OCI-LY7 (cell line): ENCODE measurements at regions of chr14 and their contacts with region 1.

Region 1: DNA sequence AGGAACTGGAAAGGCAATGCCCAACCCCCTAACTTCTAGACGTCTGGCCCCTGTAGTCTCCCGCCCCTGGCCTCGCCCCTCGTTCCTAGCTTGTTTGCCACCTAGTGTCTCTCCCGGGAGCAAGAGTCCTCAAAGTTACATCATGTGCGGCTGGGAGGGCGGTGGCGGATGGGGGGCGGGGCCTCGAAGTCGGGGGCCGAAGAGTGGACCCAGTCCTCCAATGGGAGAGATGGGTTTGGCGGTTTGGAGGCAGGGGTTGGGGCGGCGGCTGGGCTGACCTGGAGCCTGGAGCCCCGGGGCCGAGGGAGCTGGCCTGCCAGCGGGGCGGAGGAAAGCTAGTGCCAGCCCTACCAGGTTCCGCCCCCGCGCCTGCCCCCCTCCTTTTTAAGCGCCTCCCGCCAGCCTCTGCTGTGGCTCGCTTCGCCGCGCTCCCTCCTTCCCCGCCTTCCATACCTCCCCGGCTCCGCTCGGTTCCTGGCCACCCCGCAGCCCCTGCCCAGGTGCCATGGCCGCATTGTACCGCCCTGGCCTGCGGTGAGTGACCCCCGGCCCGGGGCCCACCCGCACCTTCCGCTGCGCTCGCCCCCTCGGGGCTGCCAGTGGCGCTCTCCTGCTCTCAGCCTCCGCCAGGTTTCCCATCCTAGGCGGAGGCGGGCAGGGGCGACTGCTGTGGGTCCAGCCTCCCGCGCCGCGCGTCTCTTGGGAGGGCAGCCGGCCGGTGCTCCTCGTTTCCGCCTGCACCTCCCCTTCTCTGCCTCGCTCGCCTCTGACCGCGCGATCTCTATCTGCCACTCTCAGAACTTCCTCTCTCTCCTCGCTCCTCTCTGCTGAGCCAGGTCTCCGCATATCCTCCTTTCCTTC is at the start of gene PCK2:
- DNase-seq: peak; percentile 88
- H3K4me3 ChIP-seq: peak within 1 kb of the TSS; percentile 81
- H3K27ac ChIP-seq: peak within 1 kb of the TSS; percentile 75
- H3K4me1 ChIP-seq: peaks cover 39% of the 10 kb centered on the region
- CTCF ChIP-seq: peak; percentile 24; the same call in 1 of the 2 replicates
- total RNA-seq, gene PCK2: 33.7 and 43.6 TPM in 2 replicates

Region 2: DNA sequence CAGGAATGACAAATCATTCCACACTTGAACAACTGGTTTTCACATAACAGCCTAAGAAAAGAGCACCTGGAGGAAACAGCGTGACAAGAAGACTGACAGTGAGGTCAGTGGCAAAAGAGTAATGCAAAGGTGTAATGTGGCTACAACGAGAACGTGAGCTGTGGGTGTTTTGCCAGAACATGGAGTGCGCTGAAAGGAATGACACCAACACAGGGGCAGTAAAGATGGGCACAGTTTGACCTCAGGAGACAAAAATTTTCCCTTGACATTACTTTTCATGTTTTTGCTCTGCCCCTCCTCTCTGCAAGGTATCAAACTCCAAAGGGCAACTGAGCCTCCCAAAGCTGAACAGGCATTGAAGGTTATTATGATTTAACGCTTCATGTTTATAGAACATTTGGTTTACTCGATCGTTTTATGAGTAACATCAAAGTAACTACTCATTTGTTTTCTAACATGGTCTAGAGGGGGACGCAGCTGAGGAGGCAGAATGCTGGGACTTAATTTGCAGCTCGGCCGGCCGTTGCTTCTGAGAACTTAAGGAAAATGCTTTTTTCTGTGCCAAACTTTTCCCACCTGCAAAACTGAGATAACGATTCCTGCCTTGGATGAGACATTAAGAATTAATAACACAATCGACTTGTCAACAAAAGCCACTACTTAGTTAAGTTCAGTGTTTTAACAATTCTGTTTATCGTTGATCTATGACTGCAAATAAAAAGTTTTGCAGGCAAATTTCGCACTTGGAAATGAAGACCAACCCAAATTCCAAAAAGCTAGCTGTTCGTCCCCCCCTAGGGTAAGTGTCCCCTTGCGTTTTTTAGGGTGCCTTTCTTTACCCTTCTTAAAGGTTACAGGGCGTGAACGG is 1138.2 kb before region 1 on chr14:
- CTCF ChIA-PET with region 1: no interaction called
- POLR2A ChIA-PET with region 1: no interaction called
- intact Hi-C with region 1: no loop called
- DNase-seq: peak; percentile 37
- H3K4me3 ChIP-seq: peak overlapping the region; percentile 78
- H3K27ac ChIP-seq: peak overlapping the region; percentile 74
- H3K4me1 ChIP-seq: peaks cover 18% of the 10 kb centered on the region
- CTCF ChIP-seq: no peak

Region 3: DNA sequence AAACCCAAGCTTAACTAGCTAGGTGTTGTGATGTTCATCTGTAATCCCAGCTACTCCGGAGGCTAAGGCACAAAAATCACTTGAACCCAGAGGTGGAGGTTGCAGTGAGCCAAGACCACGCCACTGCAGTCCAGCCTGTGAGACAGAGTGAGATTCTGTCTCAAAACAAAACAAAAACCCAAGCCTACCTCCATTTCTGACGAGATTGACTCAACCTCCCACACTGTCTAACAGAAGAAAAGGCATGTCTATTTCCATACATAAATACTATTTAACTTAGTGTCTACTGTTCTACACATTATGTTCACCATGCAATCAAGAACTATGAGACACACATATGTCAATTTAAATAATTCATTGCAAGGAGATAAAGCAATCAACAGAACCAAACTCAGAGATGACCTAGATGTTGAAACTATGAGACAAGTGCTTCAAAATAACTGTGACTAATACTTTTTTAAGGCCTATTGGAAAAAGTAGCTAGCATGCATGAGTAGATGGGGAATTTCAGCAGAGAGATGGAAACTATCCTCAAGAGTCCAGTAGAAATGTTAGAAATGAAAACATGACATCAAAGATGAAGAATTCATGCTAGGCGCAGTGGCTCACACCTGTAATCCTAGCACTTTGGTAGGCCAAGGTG is 216.5 kb before region 1 on chr14:
- CTCF ChIA-PET with region 1: no interaction called
- POLR2A ChIA-PET with region 1: no interaction called
- intact Hi-C with region 1: no loop called
- DNase-seq: no peak
- H3K4me3 ChIP-seq: no peak overlapping the region
- H3K27ac ChIP-seq: no peak overlapping the region
- H3K4me1 ChIP-seq: no peaks in the 10 kb centered on the region
- CTCF ChIP-seq: no peak

Region 4: GRCh38 chr14:24013654-24014514 is 80.2 kb before region 1 on chr14:
- CTCF ChIA-PET with region 1: no interaction called
- POLR2A ChIA-PET with region 1: interaction called, 3 read pairs
- intact Hi-C with region 1: loop called (anchors 1 kb)
- DNase-seq: peak; percentile 82
- H3K4me3 ChIP-seq: no peak overlapping the region
- H3K27ac ChIP-seq: no peak overlapping the region
- H3K4me1 ChIP-seq: peaks cover 12% of the 10 kb centered on the region
- CTCF ChIP-seq: peak; percentile 90

Region 5: DNA sequence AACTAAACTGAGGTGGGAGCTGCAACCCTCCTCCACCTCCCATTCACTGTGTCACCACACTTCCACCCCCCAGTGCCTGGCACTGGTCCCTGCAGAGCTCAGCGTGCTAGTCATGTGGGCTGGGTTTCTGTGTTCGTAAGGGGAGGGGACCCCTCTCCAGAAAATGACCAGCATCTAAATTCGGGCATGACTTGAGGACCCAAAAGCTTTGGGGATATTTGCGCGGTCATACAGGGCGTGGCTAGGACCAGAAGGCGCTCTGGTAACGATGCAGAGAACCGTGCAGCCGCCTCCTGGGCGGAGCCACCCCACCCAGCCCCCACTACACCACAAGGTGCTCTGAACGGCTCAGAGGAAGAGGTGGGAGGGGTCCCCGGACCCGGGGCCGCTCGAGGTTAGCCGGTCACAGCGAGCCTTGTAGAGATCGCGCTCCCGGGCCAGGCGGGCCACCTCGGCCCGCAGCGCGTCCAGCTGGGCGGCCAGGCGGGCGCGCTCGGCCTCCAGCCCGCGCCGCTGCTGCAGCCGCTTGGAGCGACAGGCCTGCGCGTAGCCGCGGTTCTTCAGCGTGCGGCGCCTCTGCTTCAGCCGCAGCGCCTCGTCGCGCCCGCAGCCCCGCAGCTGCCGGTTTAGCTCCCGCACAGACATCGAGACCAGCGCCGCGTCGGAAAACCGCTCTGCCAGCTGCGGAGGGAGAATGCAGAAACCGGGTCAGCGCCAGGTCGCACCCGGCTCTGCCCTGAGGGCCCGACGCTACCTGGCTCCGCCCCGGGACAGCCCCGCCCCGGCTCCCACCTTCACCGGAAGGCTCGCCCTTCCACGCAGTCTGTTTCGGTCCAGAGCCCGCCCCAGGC is 13.0 kb before region 1 on chr14:
- CTCF ChIA-PET with region 1: interaction called, 5 read pairs
- POLR2A ChIA-PET with region 1: interaction called, 40 read pairs
- intact Hi-C with region 1: no loop called
- DNase-seq: peak; percentile 87
- H3K4me3 ChIP-seq: peak overlapping the region; percentile 71
- H3K27ac ChIP-seq: peak overlapping the region; percentile 39
- H3K4me1 ChIP-seq: peaks cover 24% of the 10 kb centered on the region
- CTCF ChIP-seq: no peak

Region 6: DNA sequence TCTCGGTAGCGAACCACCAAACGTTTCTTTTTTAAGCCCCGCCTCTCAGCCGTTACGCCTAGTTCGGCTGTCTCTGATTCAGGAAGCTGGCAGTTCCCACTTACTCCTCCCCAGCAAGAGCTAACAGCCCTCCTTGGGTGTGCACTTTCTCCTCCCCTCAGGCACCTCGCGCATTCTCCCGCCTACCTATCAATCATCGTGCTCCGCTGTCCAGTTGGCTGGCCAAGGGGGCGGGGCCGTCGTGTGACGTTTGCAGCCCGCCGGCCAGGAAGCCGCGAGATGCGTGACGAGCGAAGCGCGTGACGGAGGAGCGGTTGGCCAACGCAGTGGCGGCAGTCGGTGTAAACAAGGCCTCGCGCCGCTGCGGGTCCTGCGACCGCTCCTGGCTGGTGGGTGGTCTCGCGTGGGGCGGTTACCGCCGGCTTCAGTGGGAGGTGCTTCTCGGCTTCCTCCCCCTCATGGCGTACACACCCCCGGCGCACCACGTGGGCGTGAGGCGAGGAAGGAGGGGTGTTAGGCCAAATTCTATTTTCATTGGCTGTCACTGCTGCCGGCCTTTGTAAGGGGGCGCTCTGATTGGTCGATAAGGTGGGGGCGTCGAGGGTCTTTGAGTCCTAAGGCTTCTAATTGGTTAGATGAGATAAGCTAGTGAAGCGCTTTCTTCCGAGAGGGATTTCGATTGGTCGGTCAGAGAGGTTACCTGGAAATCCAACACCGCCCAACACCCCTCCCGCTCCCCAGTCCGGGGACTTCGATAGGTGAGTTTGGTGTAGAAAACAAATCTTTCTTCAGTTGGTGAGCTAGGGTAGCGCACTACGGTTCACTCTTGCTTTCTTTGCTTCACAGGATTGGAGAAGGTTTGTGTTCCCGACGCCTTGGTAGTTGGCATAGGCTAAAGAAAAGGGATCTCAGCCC is 20.7 kb after region 1 on chr14 and contains the starts of genes DCAF11 and NRL:
- CTCF ChIA-PET with region 1: interaction called, 8 read pairs
- POLR2A ChIA-PET with region 1: interaction called, 80 read pairs
- intact Hi-C with region 1: loop called (anchors 1 kb)
- DNase-seq: peak; percentile 99
- H3K4me3 ChIP-seq: peak within 1 kb of the TSS; percentile 91
- H3K27ac ChIP-seq: peak within 1 kb of the TSS; percentile 93
- H3K4me1 ChIP-seq: peaks cover 15% of the 10 kb centered on the region
- CTCF ChIP-seq: no peak
- total RNA-seq, gene DCAF11: 75.5 and 79.2 TPM in 2 replicates
- total RNA-seq, gene NRL: 3.1 and 4.6 TPM in 2 replicates

Region 7: DNA sequence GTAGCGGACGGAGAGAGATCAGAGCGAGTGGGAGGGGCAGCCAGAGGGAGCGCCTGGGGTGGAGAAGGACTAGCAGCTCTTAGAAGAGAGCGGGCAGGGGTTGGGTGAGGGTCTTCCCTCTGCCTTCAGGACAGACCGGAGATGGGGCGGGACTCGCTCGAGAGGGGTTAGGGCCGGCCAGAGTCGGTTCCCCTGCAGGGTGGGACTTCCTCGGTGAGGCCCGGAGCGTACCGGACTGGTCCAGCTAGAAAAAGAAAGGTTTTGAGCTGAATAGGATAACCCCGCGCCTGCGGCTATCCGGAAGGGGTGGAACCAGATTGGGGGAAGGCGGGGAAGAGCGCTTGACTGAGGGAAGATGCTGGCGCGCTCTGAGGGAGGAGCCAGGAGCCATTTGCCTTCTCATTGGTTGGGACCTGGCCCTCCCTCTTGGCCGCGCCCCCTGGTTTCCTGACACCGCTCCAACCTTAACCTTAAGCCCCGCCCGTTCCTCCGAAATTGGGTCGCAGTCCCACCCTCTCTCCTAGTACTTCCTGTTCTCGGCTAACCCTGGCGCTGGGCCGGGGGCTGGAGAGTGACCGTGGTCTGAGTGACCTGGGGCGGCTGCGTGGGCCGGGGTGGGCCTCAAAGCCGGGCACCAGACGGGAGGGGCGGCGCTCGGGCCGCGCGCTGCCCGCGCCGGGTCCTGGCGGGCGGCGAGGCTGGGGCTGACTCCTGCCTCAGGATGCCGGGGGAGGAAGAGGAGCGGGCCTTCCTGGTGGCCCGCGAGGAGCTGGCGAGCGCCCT is 53.0 kb after region 1 on chr14 and contains the start of gene RNF31:
- CTCF ChIA-PET with region 1: no interaction called
- POLR2A ChIA-PET with region 1: interaction called, 20 read pairs
- intact Hi-C with region 1: loop called (anchors 1 kb)
- DNase-seq: peak; percentile 99
- H3K4me3 ChIP-seq: peak within 1 kb of the TSS; percentile 94
- H3K27ac ChIP-seq: peak within 1 kb of the TSS; percentile 82
- H3K4me1 ChIP-seq: peaks cover 20% of the 10 kb centered on the region
- CTCF ChIP-seq: no peak
- total RNA-seq, gene RNF31: 37.8 and 66.1 TPM in 2 replicates